HEK293 (cell line): ENCODE measurements at regions of chr13 and their contacts with region 1.

Region 1: GRCh38 chr13:113458253-113459065 is 5.2 kb upstream of the ADPRHL1 start:
- H3K4me3 ChIP-seq: no peak overlapping the region
- H3K27ac ChIP-seq: no peak overlapping the region
- H3K4me1 ChIP-seq: no peaks in the 10 kb centered on the region
- CTCF ChIP-seq: no peak

Region 2: DNA sequence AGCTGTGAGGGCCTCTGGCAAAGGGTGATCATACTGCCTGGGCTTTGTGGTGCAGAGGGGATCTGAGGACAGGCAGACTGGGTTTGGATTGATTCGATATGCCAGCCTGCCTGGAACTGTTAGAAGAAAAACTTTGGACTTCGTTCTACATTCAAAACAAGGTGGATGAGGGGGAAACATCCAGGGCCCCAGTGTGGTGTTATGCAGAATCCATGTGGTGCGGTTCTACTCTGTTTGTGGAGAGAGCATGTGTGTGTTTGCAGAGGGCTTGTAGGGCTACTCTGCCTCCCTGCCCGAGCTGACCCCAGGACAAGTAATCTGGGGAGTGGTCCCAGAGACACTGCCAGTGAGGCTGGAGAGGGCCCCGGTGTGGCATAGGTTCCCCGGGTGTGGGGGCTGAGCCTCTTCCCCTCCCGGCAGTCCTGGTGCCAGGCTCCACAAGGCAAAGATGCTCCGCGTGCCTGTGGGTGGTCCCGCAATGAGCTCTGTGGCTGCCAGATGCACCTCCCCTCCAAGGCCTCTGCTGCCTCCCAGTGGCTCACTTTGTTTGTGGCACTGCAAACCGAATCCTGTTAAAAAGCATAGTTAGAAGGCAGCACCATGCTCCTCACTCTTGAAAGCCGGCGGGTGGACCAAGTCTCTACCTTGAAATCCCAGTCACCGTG is 103.8 kb after region 1 on chr13:
- CTCF ChIA-PET with region 1: interaction called, 10 read pairs
- POLR2A ChIA-PET with region 1: interaction called, 5 read pairs
- H3K4me3 ChIP-seq: no peak overlapping the region
- H3K27ac ChIP-seq: no peak overlapping the region
- H3K4me1 ChIP-seq: no peaks in the 10 kb centered on the region
- CTCF ChIP-seq: no peak